Caco-2 (cell line): ENCODE measurements at regions of chr11 and their contacts with region 1.

Region 1: DNA sequence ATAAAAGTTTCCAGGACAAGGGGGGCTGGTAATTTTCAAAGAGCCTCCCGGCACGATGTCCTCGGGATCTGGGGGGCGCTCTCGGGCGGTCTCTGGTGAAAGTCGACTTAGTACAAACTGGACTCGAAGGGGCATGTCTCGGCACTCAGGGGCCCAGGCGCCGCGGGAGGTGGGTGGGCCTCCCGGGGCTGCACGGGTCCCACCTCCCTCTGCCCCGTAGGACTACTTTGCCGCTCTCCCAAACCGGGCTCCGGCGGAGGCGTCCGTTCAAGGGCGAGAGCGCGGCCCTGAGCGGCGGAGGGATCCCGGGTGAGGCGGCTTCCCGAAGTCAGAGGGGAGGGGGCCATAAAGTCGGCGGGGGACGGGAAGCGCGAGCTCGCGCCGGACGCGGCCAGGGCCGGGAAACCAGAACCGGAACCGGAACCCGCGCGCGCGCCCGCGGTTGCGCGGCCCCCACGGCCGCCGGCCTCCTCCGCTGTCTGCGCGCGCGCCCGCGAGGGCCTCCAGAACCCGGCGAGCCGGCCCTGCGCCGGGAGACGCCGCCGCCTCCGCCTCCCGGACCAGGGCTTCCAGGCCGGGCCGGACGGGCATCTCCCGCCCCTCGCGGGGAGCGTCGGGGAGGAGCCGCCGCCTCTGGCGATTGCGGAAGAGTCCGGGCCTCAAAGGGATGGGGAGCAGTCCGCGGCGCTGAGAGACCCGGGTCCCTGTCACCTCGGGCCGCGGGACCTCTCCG is at the start of gene ARHGEF12:
- DNase-seq: peak; percentile 99
- H3K4me3 ChIP-seq: peak within 1 kb of the TSS; percentile 89
- H3K4me3 Mint-ChIP-seq: peak within 1 kb of the TSS; percentile 98
- H3K27ac Mint-ChIP-seq: peak within 1 kb of the TSS; percentile 85
- H3K4me1 ChIP-seq: peaks cover 30% of the 10 kb centered on the region
- H3K4me1 Mint-ChIP-seq: peaks cover 36% of the 10 kb centered on the region
- H3K27me3 ChIP-seq: no peaks in the 10 kb centered on the region
- H3K27me3 Mint-ChIP-seq: no peaks in the 10 kb centered on the region
- CTCF ChIP-seq: peak; percentile 31 to 75
- total RNA-seq, gene ARHGEF12: 89.2 and 89.3 TPM in 2 replicates

Region 2: DNA sequence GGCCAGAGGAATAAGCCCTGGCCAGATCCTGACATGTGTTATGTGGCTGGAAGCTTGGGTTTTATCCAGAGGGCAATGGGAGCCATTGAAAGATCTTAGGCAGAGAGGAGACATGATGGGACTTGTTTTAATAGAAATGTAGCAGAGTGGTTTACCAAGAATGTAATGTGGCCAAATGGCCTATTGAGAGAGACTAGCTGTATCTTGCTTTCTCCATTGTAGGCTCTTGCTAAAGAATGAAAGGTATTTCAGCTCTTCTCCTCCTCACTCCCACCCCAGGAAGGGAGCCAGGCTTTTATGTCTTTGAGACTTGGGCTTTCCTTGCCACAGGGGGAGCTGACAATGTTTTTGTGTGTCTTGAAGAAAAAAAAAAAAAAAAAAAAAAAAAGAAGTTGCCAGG is 280.4 kb before region 1 on chr11:
- CTCF ChIA-PET with region 1: no interaction called
- POLR2A ChIA-PET with region 1: no interaction called
- intact Hi-C with region 1: no loop called
- DNase-seq: no peak
- H3K4me3 ChIP-seq: no peak overlapping the region
- H3K4me3 Mint-ChIP-seq: no peak overlapping the region
- H3K27ac Mint-ChIP-seq: peak overlapping the region; percentile 54
- H3K4me1 ChIP-seq: no peaks in the 10 kb centered on the region; the same call in 1 of the 2 replicates
- H3K4me1 Mint-ChIP-seq: peaks cover 20% of the 10 kb centered on the region
- H3K27me3 ChIP-seq: no peaks in the 10 kb centered on the region
- H3K27me3 Mint-ChIP-seq: peaks cover 7% of the 10 kb centered on the region
- CTCF ChIP-seq: no peak

Region 3: DNA sequence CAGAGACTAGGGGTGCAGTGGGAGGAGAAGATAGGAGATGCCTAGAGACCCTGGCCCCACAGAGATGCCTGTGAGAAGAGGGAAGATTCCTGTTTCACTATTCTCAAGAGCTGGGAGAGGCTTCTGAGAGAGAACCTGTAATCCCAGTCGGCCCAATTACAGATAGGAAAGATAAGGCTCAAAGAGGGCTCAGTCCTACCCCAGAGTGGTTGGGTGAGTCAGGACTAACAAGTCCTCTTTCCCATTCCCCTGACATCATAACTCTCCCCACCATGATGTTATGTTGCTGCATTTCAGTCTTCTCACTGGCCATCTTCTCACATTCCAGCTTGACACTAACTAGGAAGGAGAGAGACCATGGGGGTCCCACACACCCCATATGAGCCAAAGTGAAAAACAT is 18.0 kb after region 1 on chr11:
- CTCF ChIA-PET with region 1: no interaction called
- POLR2A ChIA-PET with region 1: no interaction called
- intact Hi-C with region 1: loop called (anchors 1 kb)
- DNase-seq: peak in 1 of 2 experiments; percentile 42
- H3K4me3 ChIP-seq: no peak overlapping the region
- H3K4me3 Mint-ChIP-seq: no peak overlapping the region
- H3K27ac Mint-ChIP-seq: peak overlapping the region; percentile 28
- H3K4me1 ChIP-seq: peaks cover 38% of the 10 kb centered on the region
- H3K4me1 Mint-ChIP-seq: peaks cover 51% of the 10 kb centered on the region
- H3K27me3 ChIP-seq: no peaks in the 10 kb centered on the region
- H3K27me3 Mint-ChIP-seq: no peaks in the 10 kb centered on the region
- CTCF ChIP-seq: no peak

Region 4: GRCh38 chr11:120400564-120401364 is 64.7 kb after region 1 on chr11:
- CTCF ChIA-PET with region 1: interaction called, 3 read pairs
- POLR2A ChIA-PET with region 1: no interaction called
- intact Hi-C with region 1: loop called (anchors 2 kb)
- DNase-seq: peak in 1 of 2 experiments; percentile 33
- H3K4me3 ChIP-seq: no peak overlapping the region
- H3K4me3 Mint-ChIP-seq: peak overlapping the region; percentile 25
- H3K27ac Mint-ChIP-seq: no peak overlapping the region
- H3K4me1 ChIP-seq: peaks cover 16% of the 10 kb centered on the region
- H3K4me1 Mint-ChIP-seq: peaks cover 22% of the 10 kb centered on the region
- H3K27me3 ChIP-seq: no peaks in the 10 kb centered on the region
- H3K27me3 Mint-ChIP-seq: no peaks in the 10 kb centered on the region
- CTCF ChIP-seq: no peak

Region 5: GRCh38 chr11:120432056-120433018 is 96.3 kb after region 1 on chr11:
- CTCF ChIA-PET with region 1: interaction called, 10 read pairs
- POLR2A ChIA-PET with region 1: no interaction called
- intact Hi-C with region 1: no loop called
- DNase-seq: no peak
- H3K4me3 ChIP-seq: no peak overlapping the region
- H3K4me3 Mint-ChIP-seq: no peak overlapping the region
- H3K27ac Mint-ChIP-seq: no peak overlapping the region
- H3K4me1 ChIP-seq: no peaks in the 10 kb centered on the region
- H3K4me1 Mint-ChIP-seq: no peaks in the 10 kb centered on the region
- H3K27me3 ChIP-seq: no peaks in the 10 kb centered on the region
- H3K27me3 Mint-ChIP-seq: no peaks in the 10 kb centered on the region
- CTCF ChIP-seq: no peak

Region 6: GRCh38 chr11:120688163-120688562 is 352.1 kb after region 1 on chr11:
- CTCF ChIA-PET with region 1: interaction called, 6 read pairs
- POLR2A ChIA-PET with region 1: no interaction called
- intact Hi-C with region 1: loop called (anchors 5 kb)
- DNase-seq: peak in 1 of 2 experiments; percentile 3
- H3K4me3 ChIP-seq: no peak overlapping the region
- H3K4me3 Mint-ChIP-seq: no peak overlapping the region
- H3K27ac Mint-ChIP-seq: no peak overlapping the region
- H3K4me1 ChIP-seq: no peaks in the 10 kb centered on the region
- H3K4me1 Mint-ChIP-seq: no peaks in the 10 kb centered on the region
- H3K27me3 ChIP-seq: no peaks in the 10 kb centered on the region
- H3K27me3 Mint-ChIP-seq: peaks cover 4% of the 10 kb centered on the region
- CTCF ChIP-seq: no peak